ENCODE measurements at regions of chr17 and their contacts with region 1.

Region 1: DNA sequence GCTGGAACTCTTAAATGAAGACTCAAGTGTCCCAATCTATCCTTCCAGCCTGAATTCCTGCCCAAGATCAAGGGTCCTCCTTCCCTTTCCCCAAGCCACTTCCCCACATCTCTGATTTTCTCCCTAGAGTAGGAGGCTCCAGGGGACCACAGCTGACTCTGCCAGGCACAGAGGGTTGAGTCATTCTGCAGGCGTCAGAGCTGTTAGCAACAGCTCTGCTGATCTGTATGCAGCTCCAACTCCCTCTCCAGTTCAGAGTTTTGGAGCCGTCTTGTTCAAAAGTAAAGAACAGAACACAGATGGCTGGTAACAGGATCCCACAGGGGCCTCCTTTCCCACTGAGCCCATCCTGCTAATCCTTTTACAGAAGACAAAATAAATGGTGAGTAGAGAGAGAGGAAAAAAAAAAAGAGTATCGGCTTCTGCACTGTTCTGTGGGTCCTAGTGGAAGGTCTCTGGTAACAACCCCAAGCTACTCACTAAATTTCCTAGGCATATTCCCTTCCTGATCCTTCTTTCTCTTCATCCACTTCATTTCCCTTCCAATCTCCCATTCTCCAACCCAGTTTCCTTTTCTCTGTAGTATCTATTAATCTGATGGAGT is 13.4 kb upstream of the TAOK1 start:
- DNase-seq: peak; percentile 92
- H3K4me3 ChIP-seq: peak overlapping the region; percentile 15
- H3K27ac ChIP-seq: peak overlapping the region; percentile 79
- H3K4me1 ChIP-seq: peaks cover 57% of the 10 kb centered on the region
- H3K27me3 ChIP-seq: no peaks in the 10 kb centered on the region
- CTCF ChIP-seq: no peak

Region 2: GRCh38 chr17:29474297-29474696 is 97.5 kb after region 1 on chr17:
- CTCF ChIA-PET with region 1: no interaction called
- POLR2A ChIA-PET with region 1: no interaction called
- intact Hi-C with region 1: loop called (anchors 5 kb)
- DNase-seq: no peak
- H3K4me3 ChIP-seq: no peak overlapping the region
- H3K27ac ChIP-seq: no peak overlapping the region
- H3K4me1 ChIP-seq: no peaks in the 10 kb centered on the region
- H3K27me3 ChIP-seq: no peaks in the 10 kb centered on the region
- CTCF ChIP-seq: no peak